Activated T-helper 2 cell treated with anti-CD3 and anti-CD28 coated beads, Interferon-gamma antibody, Interleukin-2, Interleukin-4, amounts not matched to agents 10 μg/mL and 5 μg/mL and 100 μg/mL, durations not matched to agents 14 hours and 24 hours and 36 hours (primary cell): ENCODE measurements at regions of chr1 and their contacts with region 1.

Region 1: GRCh38 chr1:205121660-205122488 is at the start of gene RBBP5:
- DNase-seq: peak; percentile 90
- H3K4me3 Mint-ChIP-seq: peak within 1 kb of the TSS; percentile 98
- H3K27ac Mint-ChIP-seq: peak within 1 kb of the TSS; percentile 99
- H3K4me1 Mint-ChIP-seq: peaks cover 35% of the 10 kb centered on the region
- H3K27me3 Mint-ChIP-seq: no peaks in the 10 kb centered on the region
- total RNA-seq, gene RBBP5: 19.2 and 21.6 TPM in 2 replicates

Region 2: DNA sequence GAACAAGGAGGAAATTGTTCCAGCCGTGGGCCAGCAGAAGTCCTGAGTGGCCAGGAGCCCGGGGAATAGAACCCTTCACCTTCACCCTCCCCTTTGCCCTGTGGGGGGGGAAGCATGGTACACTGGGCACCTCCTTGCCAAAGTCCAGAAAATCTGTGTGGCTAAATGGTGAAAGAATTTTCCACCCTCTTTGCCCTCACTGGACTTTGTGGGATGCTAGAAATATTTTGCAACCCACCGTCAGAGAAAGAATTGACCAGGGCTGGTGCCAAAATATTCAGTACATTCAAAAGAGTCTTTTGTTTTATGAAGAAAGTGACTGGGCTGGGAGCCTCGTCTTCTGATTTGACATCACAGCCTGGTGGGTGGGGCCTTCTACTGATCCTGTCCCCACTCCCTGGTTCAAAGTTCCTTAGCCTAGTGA is 236.6 kb before region 1 on chr1:
- intact Hi-C with region 1: no loop called
- DNase-seq: no peak
- H3K4me3 Mint-ChIP-seq: no peak overlapping the region
- H3K27ac Mint-ChIP-seq: no peak overlapping the region
- H3K4me1 Mint-ChIP-seq: no peaks in the 10 kb centered on the region
- H3K27me3 Mint-ChIP-seq: peaks cover 20% of the 10 kb centered on the region

Region 3: DNA sequence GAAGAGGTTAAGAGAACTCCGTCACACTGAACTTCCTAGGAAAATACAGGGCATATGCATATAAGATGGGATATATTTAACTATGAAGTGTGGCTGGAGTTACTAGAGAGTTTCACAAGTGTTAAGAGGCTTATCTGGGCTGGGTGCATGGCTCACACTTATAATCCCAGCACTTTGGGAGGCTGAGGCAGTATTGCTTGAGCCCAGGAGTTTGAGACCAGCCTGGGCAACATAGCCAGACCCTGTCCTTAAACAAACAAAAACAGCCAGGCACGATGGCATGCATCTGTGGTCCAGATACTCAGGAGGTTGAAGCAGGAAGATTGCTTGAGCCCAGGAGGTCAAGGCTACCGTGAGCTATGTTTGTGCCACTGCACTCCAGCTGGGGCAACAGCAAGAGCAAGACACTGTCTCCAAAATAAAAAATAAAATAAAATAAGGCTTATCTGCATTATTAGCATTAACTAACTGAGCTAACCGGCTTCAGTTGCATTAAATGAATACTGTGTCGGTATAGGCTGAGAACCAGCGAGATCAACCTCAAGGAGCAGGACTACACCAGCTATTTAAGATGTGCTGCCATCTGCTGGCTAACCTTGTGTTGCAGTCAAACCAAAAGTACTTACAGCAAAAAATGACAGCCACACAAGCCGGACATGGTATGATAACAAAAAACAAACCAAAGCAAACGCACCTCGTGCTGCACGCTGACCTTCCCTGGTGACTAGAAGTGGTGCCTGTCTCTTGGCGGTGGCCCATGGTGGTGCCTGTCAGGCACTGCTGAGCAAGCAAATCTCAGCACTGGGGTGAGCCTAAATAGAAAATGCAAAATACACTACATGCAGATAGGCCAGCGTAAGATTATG is 19.6 kb after region 1 on chr1:
- intact Hi-C with region 1: loop called (anchors 1 kb)
- DNase-seq: peak; percentile 64
- H3K4me3 Mint-ChIP-seq: no peak overlapping the region
- H3K27ac Mint-ChIP-seq: no peak overlapping the region
- H3K4me1 Mint-ChIP-seq: peaks cover 6% of the 10 kb centered on the region
- H3K27me3 Mint-ChIP-seq: no peaks in the 10 kb centered on the region

Region 4: GRCh38 chr1:205211169-205211838 is 89.4 kb after region 1 on chr1 and contains the start of gene DSTYK:
- intact Hi-C with region 1: loop called (anchors 1 kb)
- DNase-seq: peak; percentile 87
- H3K4me3 Mint-ChIP-seq: peak within 1 kb of the TSS; percentile 89
- H3K27ac Mint-ChIP-seq: peak within 1 kb of the TSS; percentile 95
- H3K4me1 Mint-ChIP-seq: peaks cover 36% of the 10 kb centered on the region
- H3K27me3 Mint-ChIP-seq: no peaks in the 10 kb centered on the region
- total RNA-seq, gene DSTYK: 27.3 and 28.6 TPM in 2 replicates